MCF 10A (cell line): ENCODE measurements at regions of chr12 and their contacts with region 1.

Region 1: DNA sequence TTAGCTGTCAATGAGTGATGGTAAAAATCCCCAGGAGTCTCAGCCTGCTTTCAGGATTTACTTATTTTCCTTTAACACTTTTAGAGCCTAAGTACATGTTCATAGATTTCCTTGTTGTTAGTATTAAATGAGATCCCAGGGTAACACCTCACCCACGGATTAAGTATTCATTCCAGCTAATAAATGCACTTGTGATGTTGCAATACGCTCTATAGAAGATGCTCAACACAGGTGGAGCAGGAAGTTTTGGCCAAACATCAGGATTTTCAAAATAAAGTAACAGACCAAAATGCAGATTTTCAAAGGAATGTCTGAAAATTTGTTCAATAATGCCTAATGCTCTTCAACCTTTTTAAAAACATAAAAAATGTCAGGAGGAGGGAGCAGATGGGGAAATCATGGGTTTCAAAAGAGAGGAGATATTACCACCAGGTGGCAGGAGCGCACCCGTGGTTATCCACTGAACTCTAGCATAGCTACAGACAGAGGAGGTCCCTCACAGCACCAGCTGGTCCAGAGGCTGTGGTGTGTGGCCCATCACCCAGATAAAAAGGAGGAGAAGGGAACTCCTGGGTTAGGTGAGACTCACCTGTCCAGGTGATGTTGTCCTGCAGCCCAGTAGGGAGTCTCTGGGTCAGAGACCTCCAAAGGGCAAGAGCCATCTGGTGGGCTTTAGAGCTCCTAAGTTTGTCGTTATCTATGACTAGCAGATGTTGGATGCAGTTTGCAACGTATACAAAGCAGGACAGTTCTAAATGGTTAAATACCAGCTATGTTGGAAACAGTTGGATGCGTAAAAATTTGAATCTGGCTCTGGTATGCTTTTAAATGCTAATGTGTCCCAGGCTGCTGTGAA is 1158.4 kb upstream of the TMEM132C start:
- DNase-seq: peak; percentile 81
- H3K4me3 Mint-ChIP-seq: no peak overlapping the region
- H3K27ac Mint-ChIP-seq: peak overlapping the region; percentile 59
- H3K4me1 Mint-ChIP-seq: peaks cover 22% of the 10 kb centered on the region
- H3K27me3 Mint-ChIP-seq: no peaks in the 10 kb centered on the region
- CTCF ChIP-seq: peak; percentile 75

Region 2: DNA sequence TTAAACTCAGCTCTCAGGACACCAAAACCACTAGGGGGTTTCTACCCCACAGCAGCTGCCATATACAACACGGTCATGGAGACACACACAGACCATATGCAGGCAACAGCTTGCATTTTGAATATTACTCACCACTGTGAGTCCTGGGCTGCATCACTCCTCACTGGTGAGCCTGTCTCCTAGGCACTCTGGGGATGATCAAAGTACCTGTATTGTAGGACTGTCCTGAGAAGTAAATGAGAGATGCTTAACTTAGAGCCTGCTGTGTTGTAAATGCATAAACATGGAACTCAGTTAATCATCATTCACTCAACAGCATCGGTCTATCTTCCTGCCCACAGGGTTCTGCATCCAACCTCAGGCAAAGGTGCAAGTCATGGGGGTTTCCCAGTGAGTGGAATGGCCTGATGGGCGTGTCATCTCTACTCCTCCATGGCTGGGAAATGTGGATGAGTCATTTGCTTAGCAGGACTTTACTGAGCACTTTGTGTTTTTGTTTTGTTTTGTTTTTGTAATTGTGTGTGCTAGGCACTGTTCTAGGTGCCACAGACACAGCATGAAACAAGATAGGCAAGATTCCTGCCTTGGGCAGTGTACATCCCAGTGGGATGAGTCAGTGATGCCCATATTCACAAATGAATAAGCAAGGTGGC is 17.1 kb after region 1 on chr12:
- CTCF ChIA-PET with region 1: interaction called, 17 read pairs
- POLR2A ChIA-PET with region 1: interaction called, 6 read pairs
- intact Hi-C with region 1: no loop called
- DNase-seq: peak; percentile 98
- H3K4me3 Mint-ChIP-seq: peak overlapping the region; percentile 62
- H3K27ac Mint-ChIP-seq: peak overlapping the region; percentile 96
- H3K4me1 Mint-ChIP-seq: peaks cover 27% of the 10 kb centered on the region
- H3K27me3 Mint-ChIP-seq: no peaks in the 10 kb centered on the region
- CTCF ChIP-seq: no peak

Region 3: GRCh38 chr12:127241072-127241817 is 132.7 kb after region 1 on chr12:
- CTCF ChIA-PET with region 1: interaction called, 22 read pairs
- POLR2A ChIA-PET with region 1: no interaction called
- intact Hi-C with region 1: no loop called
- DNase-seq: peak; percentile 76
- H3K4me3 Mint-ChIP-seq: peak overlapping the region; percentile 26
- H3K27ac Mint-ChIP-seq: no peak overlapping the region
- H3K4me1 Mint-ChIP-seq: peaks cover 58% of the 10 kb centered on the region
- H3K27me3 Mint-ChIP-seq: no peaks in the 10 kb centered on the region
- CTCF ChIP-seq: no peak

Region 4: GRCh38 chr12:127293507-127294310 is 185.1 kb after region 1 on chr12:
- CTCF ChIA-PET with region 1: interaction called, 103 read pairs
- POLR2A ChIA-PET with region 1: interaction called, 7 read pairs
- intact Hi-C with region 1: loop called (anchors 1 kb)
- DNase-seq: peak; percentile 83
- H3K4me3 Mint-ChIP-seq: no peak overlapping the region
- H3K27ac Mint-ChIP-seq: no peak overlapping the region
- H3K4me1 Mint-ChIP-seq: peaks cover 7% of the 10 kb centered on the region
- H3K27me3 Mint-ChIP-seq: no peaks in the 10 kb centered on the region
- CTCF ChIP-seq: peak; percentile 94

Region 5: DNA sequence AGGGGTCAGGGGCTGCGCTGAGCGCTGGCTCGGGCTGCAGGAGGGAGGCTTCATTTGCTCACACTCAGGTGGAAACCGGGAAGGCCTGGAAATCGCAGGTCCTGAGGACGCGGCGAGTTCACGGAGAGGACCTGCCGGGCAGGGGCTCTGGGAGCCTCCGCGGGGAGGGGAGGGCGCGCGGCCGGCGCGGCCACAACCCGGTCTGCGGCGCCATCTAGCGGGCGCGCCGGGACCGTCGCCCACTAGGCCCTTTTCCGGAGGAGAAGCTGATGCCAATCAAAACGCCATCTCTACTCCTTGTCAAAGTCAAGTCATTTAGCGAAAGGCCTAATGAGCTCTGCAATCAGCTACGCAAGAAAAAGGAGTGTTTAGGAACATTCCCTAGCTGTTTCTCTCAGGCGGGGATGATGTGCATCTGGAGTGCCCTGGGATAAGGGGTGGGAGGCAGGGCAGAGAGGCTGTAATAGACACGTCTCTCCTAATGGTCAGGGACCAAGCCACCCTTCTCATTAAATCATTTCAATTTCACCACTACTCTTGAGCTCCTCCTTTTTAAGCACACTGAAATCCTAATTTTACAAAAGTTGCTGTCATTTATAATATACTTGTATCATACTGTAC is 272.6 kb after region 1 on chr12:
- CTCF ChIA-PET with region 1: interaction called, 42 read pairs
- POLR2A ChIA-PET with region 1: no interaction called
- intact Hi-C with region 1: no loop called
- DNase-seq: peak; percentile 43
- H3K4me3 Mint-ChIP-seq: peak overlapping the region; percentile 29
- H3K27ac Mint-ChIP-seq: no peak overlapping the region
- H3K4me1 Mint-ChIP-seq: peaks cover 12% of the 10 kb centered on the region
- H3K27me3 Mint-ChIP-seq: no peaks in the 10 kb centered on the region
- CTCF ChIP-seq: peak; percentile 87

Region 6: GRCh38 chr12:127685931-127686330 is 577.3 kb after region 1 on chr12:
- CTCF ChIA-PET with region 1: no interaction called
- POLR2A ChIA-PET with region 1: no interaction called
- intact Hi-C with region 1: no loop called
- DNase-seq: no peak
- H3K4me3 Mint-ChIP-seq: no peak overlapping the region
- H3K27ac Mint-ChIP-seq: no peak overlapping the region
- H3K4me1 Mint-ChIP-seq: no peaks in the 10 kb centered on the region
- H3K27me3 Mint-ChIP-seq: no peaks in the 10 kb centered on the region
- CTCF ChIP-seq: no peak